ENCODE measurements at regions of chr12 and their contacts with region 1.

Region 1: DNA sequence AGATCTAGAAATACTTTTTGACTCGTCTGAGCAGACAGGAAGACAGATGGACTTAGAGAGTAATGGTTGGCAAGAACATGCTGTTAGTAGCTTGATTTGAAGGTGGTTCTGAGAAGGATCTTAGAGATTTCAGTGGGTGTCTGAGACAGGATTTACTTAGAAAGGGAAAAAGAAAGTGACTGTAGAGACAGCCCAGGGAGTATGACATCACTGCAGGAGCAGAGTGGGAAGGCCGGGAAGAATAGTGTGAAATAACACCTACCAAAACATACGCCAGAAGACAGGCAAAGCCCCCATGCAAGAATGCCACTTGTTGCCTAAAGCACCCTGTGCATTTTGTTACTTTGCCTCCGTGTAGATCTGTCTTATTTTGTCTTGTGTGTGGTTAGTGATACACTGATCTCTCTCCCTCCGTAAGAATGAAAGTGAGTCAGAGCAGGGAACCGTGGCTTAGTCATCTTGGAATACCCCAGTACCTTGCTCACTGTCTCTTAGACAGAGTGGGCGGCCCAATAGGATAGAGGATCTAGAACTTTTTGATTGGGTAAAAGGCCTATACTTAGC is 161.3 kb upstream of the IFNG-AS1 start:
- DNase-seq: peak in 1 of 2 donors; percentile 78
- H3K4me3 ChIP-seq: peak overlapping the region; percentile 47 to 53
- H3K27ac ChIP-seq: peak overlapping the region; percentile 89 to 91
- H3K4me1 ChIP-seq: peaks cover 0 to 9% of the 10 kb centered on the region in 2 donors
- H3K27me3 ChIP-seq: no peaks in the 10 kb centered on the region
- CTCF ChIP-seq: no peak

Region 2: GRCh38 chr12:67320614-67321295 is 507.1 kb before region 1 on chr12:
- intact Hi-C with region 1: no loop called
- DNase-seq: no peak
- H3K4me3 ChIP-seq: no peak overlapping the region
- H3K27ac ChIP-seq: no peak overlapping the region
- H3K4me1 ChIP-seq: no peaks in the 10 kb centered on the region
- H3K27me3 ChIP-seq: no peaks in the 10 kb centered on the region
- CTCF ChIP-seq: no peak

Region 3: DNA sequence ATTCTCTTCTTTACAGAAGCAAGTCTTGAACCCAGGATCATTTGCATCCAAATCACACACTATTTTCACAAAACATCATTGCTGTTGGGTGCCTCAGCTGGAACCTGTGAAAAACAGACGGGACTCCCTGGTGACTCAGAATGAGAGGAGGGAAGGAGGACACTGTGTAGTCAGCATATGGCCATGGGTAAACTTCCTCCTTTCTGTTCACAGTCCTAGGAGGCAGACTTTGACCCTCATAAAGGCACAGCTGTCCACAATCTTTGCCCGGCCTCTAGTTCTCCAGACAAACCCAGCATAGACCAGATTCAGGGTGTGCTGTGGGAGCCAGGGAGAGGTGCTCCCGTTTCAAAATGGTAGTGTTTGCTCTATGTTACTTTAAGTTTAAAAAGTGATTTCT is 117.3 kb before region 1 on chr12:
- intact Hi-C with region 1: loop called (anchors 10 kb)
- DNase-seq: no peak
- H3K4me3 ChIP-seq: no peak overlapping the region
- H3K27ac ChIP-seq: no peak overlapping the region
- H3K4me1 ChIP-seq: peaks cover 0 to under 1% of the 10 kb centered on the region in 2 donors
- H3K27me3 ChIP-seq: no peaks in the 10 kb centered on the region
- CTCF ChIP-seq: no peak

Region 4: GRCh38 chr12:67910360-67911274 is 82.7 kb after region 1 on chr12:
- intact Hi-C with region 1: loop called (anchors 5 kb)
- DNase-seq: no peak
- H3K4me3 ChIP-seq: no peak overlapping the region
- H3K27ac ChIP-seq: no peak overlapping the region
- H3K4me1 ChIP-seq: peaks cover 0 to 7% of the 10 kb centered on the region in 2 donors
- H3K27me3 ChIP-seq: no peaks in the 10 kb centered on the region
- CTCF ChIP-seq: no peak

Measured in ascending aorta (tissue), 2 donors.